ENCODE measurements at regions of chr6 and their contacts with region 1.

Region 1: DNA sequence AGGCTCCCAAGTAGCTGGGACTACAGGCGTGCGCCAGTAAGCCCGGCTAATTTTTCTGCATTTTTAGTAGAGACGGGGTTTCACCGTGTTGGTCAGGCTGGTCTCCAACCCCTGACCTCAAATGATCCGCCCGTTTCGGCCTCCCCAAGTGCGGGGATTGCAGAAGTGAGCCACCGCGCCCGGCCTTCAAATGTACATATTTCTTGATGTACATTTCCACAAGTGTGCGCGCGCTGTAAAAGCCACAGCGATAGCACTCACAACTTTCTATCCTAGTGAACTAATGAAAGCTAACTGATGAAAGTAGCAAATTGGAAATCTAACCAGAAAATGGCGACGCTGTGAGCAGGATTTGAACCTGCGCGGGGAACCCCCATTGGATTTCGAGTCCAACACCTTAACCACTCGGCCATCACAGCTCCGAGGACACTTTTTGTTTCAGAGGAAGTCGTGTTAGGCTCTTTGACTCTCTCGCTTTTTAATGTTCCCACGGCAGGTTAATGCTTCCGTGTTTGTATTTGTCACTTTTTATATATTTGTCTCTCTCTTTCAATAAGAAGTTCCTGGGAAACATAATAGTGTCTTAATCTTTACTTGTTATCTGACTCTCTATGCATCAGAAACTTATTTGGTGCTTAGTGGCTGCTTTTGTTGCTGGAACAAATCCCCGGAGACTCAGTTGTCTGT is 199.4 kb upstream of the ZNF184 start:
- DNase-seq: peak; percentile 71
- ATAC-seq: peak; percentile 70
- H3K4me3 Mint-ChIP-seq: peak overlapping the region; percentile 42
- H3K27ac Mint-ChIP-seq: no peak overlapping the region
- H3K4me1 Mint-ChIP-seq: peaks cover 26% of the 10 kb centered on the region
- H3K27me3 Mint-ChIP-seq: peaks cover 66% of the 10 kb centered on the region

Region 2: DNA sequence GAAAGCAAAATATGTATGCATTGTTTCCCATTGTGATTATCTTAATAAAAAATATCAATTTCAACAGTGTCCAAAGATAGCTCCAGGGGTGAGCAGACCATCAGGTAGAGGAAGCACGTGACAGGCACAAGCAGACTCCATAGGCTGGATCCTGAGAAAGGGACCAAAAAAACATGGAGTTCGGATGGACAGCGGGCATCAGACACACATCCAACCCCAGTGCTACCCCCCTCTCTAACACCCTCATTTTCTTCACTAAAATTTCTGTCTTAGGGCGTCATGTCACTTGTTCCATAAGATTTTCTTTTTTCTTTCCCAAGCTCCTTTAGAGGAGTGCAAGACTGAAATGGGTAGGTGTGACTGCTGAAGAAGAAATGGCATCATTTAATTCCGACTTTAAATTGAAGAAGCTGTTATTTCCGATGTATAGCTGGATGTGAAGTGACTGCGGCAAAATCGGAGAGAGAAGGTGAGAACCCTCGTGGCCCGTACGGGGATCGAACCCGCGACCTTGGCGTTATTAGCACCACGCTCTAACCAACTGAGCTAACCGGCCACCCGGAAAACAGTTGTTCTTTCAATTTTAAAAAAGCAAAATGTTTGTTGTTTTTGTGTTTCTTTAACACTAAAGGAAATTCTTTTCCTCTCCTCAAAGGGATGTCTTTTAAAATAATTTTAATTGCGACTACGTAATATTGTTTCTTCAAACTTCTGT is 435.0 kb before region 1 on chr6:
- CTCF ChIA-PET with region 1: no interaction called
- POLR2A ChIA-PET with region 1: no interaction called
- intact Hi-C with region 1: loop called in 1 of 2 experiments (anchors 5 kb)
- DNase-seq: peak; percentile 83
- ATAC-seq: peak; percentile 60
- H3K4me3 Mint-ChIP-seq: peak overlapping the region; percentile 54
- H3K27ac Mint-ChIP-seq: no peak overlapping the region
- H3K4me1 Mint-ChIP-seq: peaks cover 24% of the 10 kb centered on the region
- H3K27me3 Mint-ChIP-seq: peaks cover 63% of the 10 kb centered on the region

Region 3: GRCh38 chr6:27280064-27280539 is 392.2 kb before region 1 on chr6:
- CTCF ChIA-PET with region 1: no interaction called
- POLR2A ChIA-PET with region 1: no interaction called
- intact Hi-C with region 1: loop called in 1 of 2 experiments (anchors 5 kb)
- DNase-seq: peak; percentile 64
- ATAC-seq: peak; percentile 36
- H3K4me3 Mint-ChIP-seq: peak overlapping the region; percentile 58
- H3K27ac Mint-ChIP-seq: peak overlapping the region; percentile 13
- H3K4me1 Mint-ChIP-seq: peaks cover 10% of the 10 kb centered on the region
- H3K27me3 Mint-ChIP-seq: peaks cover 71% of the 10 kb centered on the region

Region 4: DNA sequence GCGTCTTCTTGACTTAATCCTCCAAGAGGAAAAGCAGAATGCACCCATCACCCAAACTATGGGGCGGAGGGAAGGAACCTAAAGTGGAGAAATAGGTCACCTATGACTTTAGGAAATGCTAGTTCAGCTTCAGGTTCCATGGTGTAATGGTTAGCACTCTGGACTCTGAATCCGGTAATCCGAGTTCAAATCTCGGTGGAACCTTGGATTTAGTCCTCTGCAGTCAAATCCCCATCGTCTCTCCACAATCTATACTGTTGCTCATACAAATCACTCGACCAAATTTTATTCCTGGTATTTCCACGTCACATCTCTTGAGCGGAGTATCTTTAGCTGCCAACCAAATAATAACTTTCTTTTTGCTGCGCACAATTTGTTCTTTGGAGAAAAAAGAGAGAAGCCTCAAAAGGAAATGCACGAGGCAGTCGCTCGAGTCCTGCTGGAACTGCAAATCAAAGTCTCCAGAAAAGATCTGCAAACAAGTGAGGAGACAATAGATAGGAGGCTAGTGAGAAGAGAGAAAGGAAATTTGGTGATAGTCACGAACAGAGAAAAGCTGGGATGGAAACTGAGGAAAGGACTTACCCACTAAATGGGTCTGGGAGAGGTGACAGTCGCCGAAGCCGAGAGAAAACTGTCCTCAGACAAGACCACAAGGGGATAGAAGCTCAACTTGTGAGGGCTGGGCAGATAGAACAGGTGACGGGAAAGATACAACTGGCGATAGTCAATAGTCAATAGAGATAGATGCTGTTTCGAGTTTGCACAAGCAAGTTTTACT is 376.8 kb before region 1 on chr6:
- CTCF ChIA-PET with region 1: interaction called, 4 read pairs
- POLR2A ChIA-PET with region 1: no interaction called
- intact Hi-C with region 1: loop called in 1 of 2 experiments (anchors 5 kb)
- DNase-seq: no peak
- ATAC-seq: no peak
- H3K4me3 Mint-ChIP-seq: no peak overlapping the region
- H3K27ac Mint-ChIP-seq: no peak overlapping the region
- H3K4me1 Mint-ChIP-seq: peaks cover 11% of the 10 kb centered on the region
- H3K27me3 Mint-ChIP-seq: peaks cover 72% of the 10 kb centered on the region

Region 5: GRCh38 chr6:27503436-27504030 is 168.7 kb before region 1 on chr6:
- CTCF ChIA-PET with region 1: no interaction called
- POLR2A ChIA-PET with region 1: no interaction called
- intact Hi-C with region 1: loop called in 1 of 2 experiments (anchors 5 kb)
- DNase-seq: peak; percentile 87
- ATAC-seq: peak; percentile 40
- H3K4me3 Mint-ChIP-seq: peak overlapping the region; percentile 88
- H3K27ac Mint-ChIP-seq: peak overlapping the region; percentile 83
- H3K4me1 Mint-ChIP-seq: peaks cover 26% of the 10 kb centered on the region
- H3K27me3 Mint-ChIP-seq: peaks cover 4% of the 10 kb centered on the region

Region 6: DNA sequence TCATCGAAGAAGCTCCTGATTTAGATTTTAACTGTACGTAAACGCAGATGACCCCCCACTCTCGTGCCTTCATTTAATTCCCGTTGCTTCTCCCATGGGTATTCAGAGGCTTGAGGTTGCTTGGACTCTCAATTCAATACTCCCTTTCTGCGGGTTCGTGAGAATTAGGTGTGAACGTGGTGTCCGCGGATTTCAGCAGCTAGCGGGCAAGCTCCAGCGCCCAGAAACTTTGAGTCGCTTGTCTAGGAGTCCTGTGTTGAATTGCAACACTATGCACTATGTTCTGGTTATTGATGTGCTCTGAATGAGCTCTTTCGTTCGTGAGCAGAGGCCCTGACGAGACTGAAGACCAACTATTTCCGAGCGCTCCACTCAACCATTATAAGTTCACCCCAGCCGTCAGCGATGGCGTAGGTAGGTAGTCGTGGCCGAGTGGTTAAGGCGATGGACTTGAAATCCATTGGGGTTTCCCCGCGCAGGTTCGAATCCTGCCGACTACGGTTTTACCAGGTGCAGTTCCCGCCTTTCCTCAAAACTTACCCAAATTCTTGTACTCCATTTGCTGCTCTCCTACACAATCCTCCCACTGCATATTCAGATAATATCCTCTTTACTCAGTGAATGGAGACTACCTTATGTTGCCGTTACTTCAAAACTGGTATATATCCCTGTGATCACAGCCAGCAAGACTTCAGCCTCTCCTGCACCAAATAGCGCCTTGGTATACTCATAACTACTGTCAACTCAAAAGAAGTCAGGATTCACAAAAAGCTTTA is 126.8 kb before region 1 on chr6:
- CTCF ChIA-PET with region 1: no interaction called
- POLR2A ChIA-PET with region 1: no interaction called
- intact Hi-C with region 1: loop called (anchors 1 to 5 kb)
- DNase-seq: peak; percentile 73
- ATAC-seq: peak; percentile 71
- H3K4me3 Mint-ChIP-seq: peak overlapping the region; percentile 63
- H3K27ac Mint-ChIP-seq: no peak overlapping the region
- H3K4me1 Mint-ChIP-seq: peaks cover 15% of the 10 kb centered on the region
- H3K27me3 Mint-ChIP-seq: peaks cover 79% of the 10 kb centered on the region

Region 7: DNA sequence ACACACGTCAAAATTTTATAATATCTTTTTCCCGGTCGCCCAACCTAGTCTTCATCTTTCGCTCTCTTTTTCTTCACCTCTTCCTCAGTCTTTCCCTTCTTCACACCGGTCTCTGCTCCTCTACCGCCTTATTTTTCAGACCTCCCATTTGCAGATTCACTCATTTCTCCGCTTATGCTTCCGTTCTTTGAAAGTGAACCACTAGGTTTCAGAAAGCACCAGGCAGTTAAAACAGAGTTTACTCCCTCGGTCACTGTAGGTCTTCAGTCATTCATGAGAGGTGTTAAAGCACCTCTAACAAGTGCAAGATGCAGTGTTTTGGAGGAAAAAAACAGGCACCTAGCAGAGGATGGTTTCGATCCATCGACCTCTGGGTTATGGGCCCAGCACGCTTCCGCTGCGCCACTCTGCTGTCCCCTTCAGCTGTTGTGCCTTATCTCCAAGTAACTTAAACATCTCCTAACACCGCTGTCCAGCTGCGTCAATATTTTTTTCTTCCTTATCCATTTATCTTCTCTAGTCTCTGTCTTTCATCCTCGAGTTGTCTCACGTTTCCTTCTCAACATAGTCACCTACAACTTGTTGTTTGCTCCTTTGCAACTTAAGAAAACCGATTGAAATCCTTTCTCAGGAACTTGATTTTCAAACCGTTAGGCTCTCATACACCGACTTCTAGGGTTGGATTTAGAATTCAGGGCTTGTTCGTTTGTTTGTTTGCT is 79.6 kb before region 1 on chr6:
- CTCF ChIA-PET with region 1: no interaction called
- POLR2A ChIA-PET with region 1: no interaction called
- intact Hi-C with region 1: loop called in 1 of 2 experiments (anchors 5 kb)
- DNase-seq: peak; percentile 72
- ATAC-seq: peak; percentile 94
- H3K4me3 Mint-ChIP-seq: no peak overlapping the region
- H3K27ac Mint-ChIP-seq: no peak overlapping the region
- H3K4me1 Mint-ChIP-seq: no peaks in the 10 kb centered on the region
- H3K27me3 Mint-ChIP-seq: peaks cover 35% of the 10 kb centered on the region

Measured in activated CD4-positive, alpha-beta T cell treated with anti-CD3 and anti-CD28 coated beads for 36 hours (primary cell).